Activated naive CD4-positive, alpha-beta T cell treated with anti-CD3 and anti-CD28 coated beads for 36 hours (primary cell): ENCODE measurements at regions of chr1 and their contacts with region 1.

Region 1: DNA sequence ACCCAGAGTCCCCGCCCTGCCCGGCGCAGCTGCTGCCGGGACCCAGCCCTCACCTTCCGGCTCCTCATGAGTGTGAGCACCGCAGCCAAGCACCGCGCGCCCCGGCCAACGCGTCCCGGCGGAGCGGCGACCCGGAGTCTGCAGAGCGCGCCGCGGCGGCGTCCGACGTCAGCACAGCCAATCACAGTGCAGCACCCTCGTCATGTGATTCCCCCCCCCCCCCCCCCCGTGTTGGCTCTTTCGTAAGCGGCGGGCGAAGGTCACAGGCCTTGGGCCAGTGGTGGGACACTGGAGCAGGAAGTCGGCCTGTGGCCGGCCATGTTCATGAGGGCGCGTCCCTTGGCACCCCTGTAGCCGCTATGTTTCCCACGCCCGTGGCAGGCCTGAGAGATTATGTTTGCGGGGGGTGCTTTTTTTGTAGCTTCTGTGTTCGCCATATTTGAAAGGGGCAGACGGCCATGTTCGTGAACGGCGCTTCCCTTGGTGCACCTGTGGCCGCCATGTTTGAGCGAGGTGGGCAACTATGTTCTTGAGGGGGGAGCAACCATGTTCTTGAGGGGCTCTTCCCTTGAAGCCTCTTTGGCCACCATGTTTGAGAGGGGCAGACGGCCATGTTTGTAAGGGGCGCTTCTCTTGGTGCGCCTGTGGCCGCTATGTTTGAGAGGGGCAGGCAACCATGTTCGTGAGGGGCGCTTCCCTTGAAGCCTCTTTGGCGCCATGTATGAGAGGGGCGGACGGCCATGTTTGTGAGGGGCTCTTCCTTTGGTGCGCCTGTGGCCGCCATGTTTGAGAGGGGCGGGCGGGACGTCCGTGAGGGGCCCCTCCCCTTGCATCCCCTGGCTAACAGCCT is at the start of gene C1orf174:
- DNase-seq: peak; percentile 93
- H3K4me3 Mint-ChIP-seq: peak within 1 kb of the TSS; percentile 90
- H3K27ac Mint-ChIP-seq: peak within 1 kb of the TSS; percentile 99
- H3K4me1 Mint-ChIP-seq: peaks cover 55% of the 10 kb centered on the region
- H3K27me3 Mint-ChIP-seq: no peaks in the 10 kb centered on the region
- total RNA-seq, gene C1orf174: 29.5 to 30.6 TPM

Region 2: DNA sequence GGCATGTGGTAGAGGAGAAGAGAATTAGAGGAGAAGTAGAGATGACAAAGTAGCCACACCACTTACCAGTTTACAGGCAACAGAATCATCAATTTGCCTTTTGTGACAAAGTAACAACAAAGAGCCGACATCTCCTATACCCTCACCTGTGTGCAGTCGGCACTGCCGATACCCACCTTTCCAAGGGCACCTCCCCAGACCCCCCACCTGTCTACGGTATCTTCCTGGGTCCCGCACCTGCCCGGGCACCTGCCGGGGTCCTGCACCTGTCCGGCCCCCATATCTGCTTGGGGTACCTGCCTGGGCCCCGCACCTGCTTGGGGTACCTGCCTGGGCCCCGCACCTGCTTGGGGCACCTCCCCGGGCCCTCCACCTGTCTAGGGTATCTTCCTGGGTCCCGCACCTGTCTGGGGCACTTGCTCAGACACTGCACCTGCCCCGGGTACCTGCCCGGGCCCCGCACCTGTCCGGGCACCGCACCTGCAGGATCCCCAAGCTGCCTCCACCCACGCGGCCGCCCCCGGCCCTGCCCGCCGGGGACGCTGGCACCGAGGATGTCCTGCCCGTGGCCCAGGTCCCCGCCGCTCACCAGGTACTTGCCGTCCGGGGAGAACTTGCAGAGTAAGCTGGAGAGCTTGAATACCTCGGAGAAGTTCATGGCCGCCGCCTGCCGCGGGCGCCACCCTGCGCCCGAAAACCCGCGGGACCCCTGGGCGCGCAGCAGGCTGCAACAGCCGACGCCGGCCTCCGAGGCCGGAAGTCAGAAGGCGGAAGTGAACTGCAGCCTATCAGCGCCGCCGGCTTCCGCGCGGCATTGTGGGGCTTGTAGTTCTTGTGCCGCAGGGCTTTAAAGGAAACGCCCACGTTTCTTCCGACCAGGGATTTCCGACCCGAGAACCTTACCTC is 250.7 kb before region 1 on chr1 and contains the start of gene WRAP73:
- CTCF ChIA-PET with region 1: no interaction called
- intact Hi-C with region 1: loop called (anchors 2 kb)
- DNase-seq: peak; percentile 95
- H3K4me3 Mint-ChIP-seq: peak within 1 kb of the TSS; percentile 76
- H3K27ac Mint-ChIP-seq: no peak within 1 kb of the TSS
- H3K4me1 Mint-ChIP-seq: peaks cover 22% of the 10 kb centered on the region
- H3K27me3 Mint-ChIP-seq: peaks cover 24% of the 10 kb centered on the region
- total RNA-seq, gene WRAP73: 32.4 to 35.4 TPM

Region 3: DNA sequence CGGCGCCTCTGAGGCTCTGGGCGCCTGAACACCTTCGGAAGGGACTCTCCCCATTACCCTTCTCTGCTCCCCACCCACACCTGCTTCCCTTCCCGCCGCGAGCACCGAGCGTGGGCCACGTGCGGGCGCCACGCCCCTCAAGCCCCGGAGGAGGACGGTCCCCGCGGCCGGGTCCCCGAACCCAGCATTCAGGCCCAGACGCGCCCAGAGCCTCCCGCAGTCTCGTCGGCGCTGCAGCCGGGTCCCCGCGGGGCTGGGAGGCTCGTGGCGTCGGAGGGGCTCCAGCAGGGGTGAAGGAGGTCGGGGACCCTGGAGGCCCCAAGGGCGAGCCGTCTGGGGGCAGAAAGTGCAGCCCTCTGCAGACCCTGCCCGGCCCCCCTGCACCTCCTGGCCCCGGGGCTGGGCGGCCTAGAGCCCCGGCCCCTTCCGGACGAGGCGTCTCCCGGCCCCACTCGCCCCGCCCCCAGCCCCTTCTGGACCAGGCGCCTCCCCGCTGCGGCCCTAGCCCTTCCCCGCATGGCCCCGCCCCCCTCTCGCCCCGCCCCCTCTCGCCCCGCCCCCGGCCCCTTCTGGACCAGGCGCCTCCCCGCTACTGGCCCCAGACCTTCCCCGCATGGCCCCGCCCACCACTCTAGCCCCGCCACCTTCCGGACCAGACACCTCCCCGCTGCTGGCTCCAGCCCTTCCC is 128.2 kb before region 1 on chr1:
- CTCF ChIA-PET with region 1: no interaction called
- intact Hi-C with region 1: loop called (anchors 2 kb)
- DNase-seq: peak; percentile 94
- H3K4me3 Mint-ChIP-seq: peak overlapping the region; percentile 65
- H3K27ac Mint-ChIP-seq: peak overlapping the region; percentile 8
- H3K4me1 Mint-ChIP-seq: peaks cover 12% of the 10 kb centered on the region
- H3K27me3 Mint-ChIP-seq: no peaks in the 10 kb centered on the region

Region 4: DNA sequence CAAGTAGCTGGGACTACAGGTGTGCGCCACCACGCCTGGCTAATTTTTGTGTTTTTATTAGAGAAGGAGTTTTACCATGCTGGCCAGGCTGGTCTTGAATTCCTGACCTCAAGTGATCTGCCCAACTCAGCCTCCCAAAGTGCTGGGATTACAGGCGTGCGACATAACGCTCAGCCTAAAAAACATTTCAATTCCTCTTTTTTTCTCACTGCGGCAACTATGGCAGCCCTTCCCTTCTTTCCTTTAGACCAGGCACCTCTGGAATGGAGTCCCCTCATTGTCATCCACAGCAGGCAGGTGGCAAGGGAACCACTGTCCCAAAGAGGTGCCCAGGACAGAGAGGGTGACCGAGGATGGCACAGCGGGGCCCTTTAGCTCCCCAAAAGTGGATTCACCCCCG is 57.4 kb before region 1 on chr1:
- CTCF ChIA-PET with region 1: no interaction called
- intact Hi-C with region 1: no loop called
- DNase-seq: no peak
- H3K4me3 Mint-ChIP-seq: no peak overlapping the region
- H3K27ac Mint-ChIP-seq: no peak overlapping the region
- H3K4me1 Mint-ChIP-seq: no peaks in the 10 kb centered on the region
- H3K27me3 Mint-ChIP-seq: no peaks in the 10 kb centered on the region

Region 5: GRCh38 chr1:3856908-3857790 is 43.2 kb before region 1 on chr1 and contains the starts of genes CEP104 and DFFB:
- CTCF ChIA-PET with region 1: interaction called, 5 read pairs
- intact Hi-C with region 1: loop called (anchors 1 kb)
- DNase-seq: peak; percentile 97
- H3K4me3 Mint-ChIP-seq: peak within 1 kb of the TSS; percentile 95
- H3K27ac Mint-ChIP-seq: peak within 1 kb of the TSS; percentile 82
- H3K4me1 Mint-ChIP-seq: peaks cover 29% of the 10 kb centered on the region
- H3K27me3 Mint-ChIP-seq: no peaks in the 10 kb centered on the region
- total RNA-seq, gene CEP104: 25.4 to 27.3 TPM
- total RNA-seq, gene DFFB: 6.3 to 6.5 TPM